Ascending aorta (tissue), 2 donors: ENCODE measurements at regions of chr11 and their contacts with region 1.

Region 1: DNA sequence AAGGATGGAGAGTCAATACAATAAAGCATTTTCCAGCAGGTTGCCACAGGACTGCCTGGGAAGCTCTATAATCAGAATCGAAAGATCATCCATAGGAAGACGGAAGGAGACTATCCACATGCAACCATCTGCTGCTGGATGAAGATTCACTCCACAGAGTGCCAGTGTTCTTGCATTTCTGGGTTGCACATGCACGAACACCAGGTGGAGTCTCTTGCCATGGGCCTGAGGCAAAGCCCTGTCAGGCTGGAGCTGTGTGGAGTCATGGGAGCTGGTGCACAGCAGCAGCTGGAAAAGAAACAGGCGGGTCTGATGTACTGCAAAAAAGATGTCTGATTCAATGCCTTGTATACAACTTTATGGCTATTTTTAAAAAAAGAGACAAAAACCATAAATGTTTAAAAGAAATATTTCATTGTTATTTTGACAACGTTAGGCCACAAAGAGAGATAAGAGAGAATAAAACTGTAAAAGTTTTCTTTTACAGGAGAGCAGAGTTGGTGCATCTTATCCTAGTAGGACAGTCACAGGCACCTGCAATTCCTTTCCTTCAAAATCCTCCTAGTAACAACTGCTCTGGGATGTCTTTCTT is 12.9 kb upstream of the FAT3 start:
- DNase-seq: peak in 1 of 2 donors; percentile 69
- H3K4me3 ChIP-seq: no peak overlapping the region
- H3K27ac ChIP-seq: no peak overlapping the region
- H3K4me1 ChIP-seq: no peaks in the 10 kb centered on the region
- H3K27me3 ChIP-seq: no peaks in the 10 kb centered on the region
- CTCF ChIP-seq: peak; percentile 20 to 57 (median 44)

Region 2: GRCh38 chr11:92253945-92254344 is 42.3 kb after region 1 on chr11:
- intact Hi-C with region 1: no loop called
- DNase-seq: no peak
- H3K4me3 ChIP-seq: no peak overlapping the region
- H3K27ac ChIP-seq: peak overlapping the region in 1 of 2 donors; percentile 43
- H3K4me1 ChIP-seq: peaks cover 0 to 16% of the 10 kb centered on the region in 2 donors
- H3K27me3 ChIP-seq: no peaks in the 10 kb centered on the region
- CTCF ChIP-seq: no peak

Region 3: GRCh38 chr11:92552942-92553341 is 341.3 kb after region 1 on chr11:
- intact Hi-C with region 1: loop called (anchors 5 kb)
- DNase-seq: no peak
- H3K4me3 ChIP-seq: no peak overlapping the region
- H3K27ac ChIP-seq: no peak overlapping the region
- H3K4me1 ChIP-seq: no peaks in the 10 kb centered on the region
- H3K27me3 ChIP-seq: no peaks in the 10 kb centered on the region
- CTCF ChIP-seq: no peak

Region 4: GRCh38 chr11:92886243-92886905 is 674.7 kb after region 1 on chr11:
- intact Hi-C with region 1: loop called (anchors 5 kb)
- DNase-seq: no peak
- H3K4me3 ChIP-seq: no peak overlapping the region
- H3K27ac ChIP-seq: no peak overlapping the region
- H3K4me1 ChIP-seq: no peaks in the 10 kb centered on the region
- H3K27me3 ChIP-seq: no peaks in the 10 kb centered on the region
- CTCF ChIP-seq: peak in 2 of 3 experiments; percentile 43 to 62